CD8-positive, alpha-beta T cell (primary cell): ENCODE measurements at regions of chr17 and their contacts with region 1.

Region 1: DNA sequence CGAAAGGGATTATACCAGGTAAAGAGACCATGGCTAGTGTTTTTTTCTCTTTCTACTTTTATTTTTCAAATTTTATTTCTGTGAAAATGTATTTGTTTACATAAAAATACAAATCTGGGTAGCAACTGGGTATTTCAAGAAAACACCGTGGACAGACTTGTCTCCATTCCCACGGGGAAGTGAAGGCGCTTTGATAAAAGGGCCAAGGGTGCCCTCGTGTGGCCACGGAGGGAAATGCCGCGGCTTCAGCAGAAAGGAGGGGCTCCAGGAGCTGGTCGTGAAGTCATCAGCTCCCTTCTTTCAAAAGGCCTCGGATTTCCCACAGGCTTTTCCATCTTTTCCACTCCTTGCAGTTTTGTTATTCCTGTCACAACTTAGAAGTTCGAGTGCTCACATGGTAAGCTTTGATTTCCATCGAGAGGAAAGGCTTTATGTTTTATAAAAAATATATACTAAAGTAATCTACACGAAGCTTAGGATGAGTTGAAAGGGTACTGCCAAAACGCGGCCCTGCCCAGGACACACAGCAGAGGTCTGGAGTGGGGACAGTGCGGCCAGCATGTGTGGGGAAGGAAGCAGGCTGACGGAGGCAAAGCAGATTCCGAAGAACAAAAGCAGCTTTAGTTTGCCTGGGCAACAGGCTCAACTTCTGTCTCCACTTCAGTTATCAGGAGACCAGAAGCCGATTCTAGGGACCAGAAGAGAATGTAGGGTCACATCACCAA is 15.3 kb upstream of the MNT start:
- DNase-seq: peak; percentile 74 to 92 (median 88)
- ATAC-seq: peak; percentile 93
- H3K4me3 ChIP-seq: no peak overlapping the region
- H3K4me3 Mint-ChIP-seq: no peak overlapping the region
- H3K27ac ChIP-seq: no peak overlapping the region
- H3K27ac Mint-ChIP-seq: no peak overlapping the region
- H3K4me1 ChIP-seq: peaks cover 4% of the 10 kb centered on the region
- H3K4me1 Mint-ChIP-seq: peaks cover 6% of the 10 kb centered on the region
- H3K27me3 ChIP-seq: no peaks in the 10 kb centered on the region
- H3K27me3 Mint-ChIP-seq: no peaks in the 10 kb centered on the region
- CTCF ChIP-seq: peak; percentile 99

Region 2: GRCh38 chr17:2374549-2375277 is 41.5 kb before region 1 on chr17:
- CTCF ChIA-PET with region 1: interaction called, 465 read pairs
- POLR2A ChIA-PET with region 1: interaction called, 3 read pairs
- intact Hi-C with region 1: no loop called
- DNase-seq: no peak
- ATAC-seq: no peak
- H3K4me3 ChIP-seq: no peak overlapping the region
- H3K4me3 Mint-ChIP-seq: no peak overlapping the region
- H3K27ac ChIP-seq: no peak overlapping the region
- H3K27ac Mint-ChIP-seq: peak overlapping the region; percentile 49
- H3K4me1 ChIP-seq: no peaks in the 10 kb centered on the region
- H3K4me1 Mint-ChIP-seq: no peaks in the 10 kb centered on the region
- H3K27me3 ChIP-seq: no peaks in the 10 kb centered on the region
- H3K27me3 Mint-ChIP-seq: no peaks in the 10 kb centered on the region
- CTCF ChIP-seq: no peak

Region 3: GRCh38 chr17:2386400-2387085 is 29.6 kb before region 1 on chr17:
- CTCF ChIA-PET with region 1: interaction called, 465 read pairs
- POLR2A ChIA-PET with region 1: interaction called, 26 read pairs
- intact Hi-C with region 1: loop called (anchors 1 kb)
- DNase-seq: no peak
- ATAC-seq: no peak
- H3K4me3 ChIP-seq: no peak overlapping the region
- H3K4me3 Mint-ChIP-seq: no peak overlapping the region
- H3K27ac ChIP-seq: no peak overlapping the region
- H3K27ac Mint-ChIP-seq: no peak overlapping the region
- H3K4me1 ChIP-seq: peaks cover 25% of the 10 kb centered on the region
- H3K4me1 Mint-ChIP-seq: peaks cover 24% of the 10 kb centered on the region
- H3K27me3 ChIP-seq: no peaks in the 10 kb centered on the region
- H3K27me3 Mint-ChIP-seq: no peaks in the 10 kb centered on the region
- CTCF ChIP-seq: no peak

Region 4: GRCh38 chr17:2427215-2427614 is 11.0 kb after region 1 on chr17:
- CTCF ChIA-PET with region 1: interaction called, 22 read pairs
- POLR2A ChIA-PET with region 1: interaction called, 3 read pairs
- intact Hi-C with region 1: no loop called
- DNase-seq: no peak
- ATAC-seq: no peak
- H3K4me3 ChIP-seq: no peak overlapping the region
- H3K4me3 Mint-ChIP-seq: no peak overlapping the region
- H3K27ac ChIP-seq: no peak overlapping the region
- H3K27ac Mint-ChIP-seq: no peak overlapping the region
- H3K4me1 ChIP-seq: no peaks in the 10 kb centered on the region
- H3K4me1 Mint-ChIP-seq: no peaks in the 10 kb centered on the region
- H3K27me3 ChIP-seq: no peaks in the 10 kb centered on the region
- H3K27me3 Mint-ChIP-seq: no peaks in the 10 kb centered on the region
- CTCF ChIP-seq: no peak